HCT116 (cell line): ENCODE measurements at regions of chr6 and their contacts with region 1.

Region 1: DNA sequence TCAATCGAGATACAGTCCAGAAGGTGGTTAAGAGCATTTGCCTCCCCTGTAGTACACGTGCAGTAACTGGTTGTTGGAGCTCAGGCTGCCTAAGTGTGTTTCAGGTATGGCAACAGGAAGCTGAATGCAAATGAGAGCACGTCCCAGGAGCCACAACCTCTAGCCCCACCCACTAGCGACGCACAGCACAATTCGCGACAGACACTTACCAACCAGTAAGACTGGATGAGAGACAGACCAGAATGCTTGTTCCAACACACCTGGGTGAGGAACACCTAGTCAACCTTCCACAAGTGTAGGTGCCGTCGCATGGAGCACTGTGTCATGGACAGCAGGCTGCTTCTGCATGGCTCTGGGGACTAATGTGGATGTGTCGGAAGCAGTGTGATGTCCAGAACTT is 7.2 kb upstream of the SERPINB1 start:
- DNase-seq: no peak
- ATAC-seq: peak; percentile 43
- H3K4me3 ChIP-seq: no peak overlapping the region
- H3K27ac ChIP-seq: no peak overlapping the region; the same call in 1 of the 2 replicates
- H3K4me1 ChIP-seq: peaks cover 26 to 76% of the 10 kb centered on the region in 2 experiments
- H3K27me3 ChIP-seq: no peaks in the 10 kb centered on the region
- CTCF ChIP-seq: no peak
- POLR2A ChIP-seq: no peak
- RAD21 ChIP-seq: no peak

Region 2: GRCh38 chr6:2911171-2911570 is 62.3 kb after region 1 on chr6:
- CTCF ChIA-PET with region 1: interaction called, 14 read pairs
- POLR2A ChIA-PET with region 1: no interaction called
- RAD21 ChIA-PET with region 1: interaction called, 3 to 5 read pairs
- intact Hi-C with region 1: loop called (anchors 1 kb)
- DNase-seq: no peak
- ATAC-seq: no peak
- H3K4me3 ChIP-seq: no peak overlapping the region
- H3K27ac ChIP-seq: no peak overlapping the region
- H3K4me1 ChIP-seq: peaks cover 0 to 20% of the 10 kb centered on the region in 2 experiments; a peak in 2 of 4 replicates
- H3K27me3 ChIP-seq: no peaks in the 10 kb centered on the region
- CTCF ChIP-seq: no peak
- POLR2A ChIP-seq: no peak
- RAD21 ChIP-seq: no peak

Region 3: GRCh38 chr6:3052481-3053230 is 203.8 kb after region 1 on chr6:
- CTCF ChIA-PET with region 1: interaction called, 4 read pairs
- POLR2A ChIA-PET with region 1: interaction called, 3 read pairs
- RAD21 ChIA-PET with region 1: no interaction called
- intact Hi-C with region 1: loop called (anchors 5 kb)
- DNase-seq: no peak
- ATAC-seq: no peak
- H3K4me3 ChIP-seq: peak overlapping the region; percentile 57 to 63
- H3K27ac ChIP-seq: no peak overlapping the region
- H3K4me1 ChIP-seq: peaks cover 10 to 24% of the 10 kb centered on the region in 2 experiments; a peak in 2 of 4 replicates
- H3K27me3 ChIP-seq: no peaks in the 10 kb centered on the region
- CTCF ChIP-seq: no peak
- POLR2A ChIP-seq: no peak
- RAD21 ChIP-seq: no peak